ENCODE measurements at regions of chr3 and their contacts with region 1.

Region 1: GRCh38 chr3:31567036-31567435 is 34.3 kb downstream of the STT3B start:
- DNase-seq: no peak
- ATAC-seq: peak in 2 of 4 donors; percentile 55 to 70
- H3K4me3 ChIP-seq: no peak overlapping the region
- H3K27ac ChIP-seq: no peak overlapping the region
- H3K4me1 ChIP-seq: peaks cover 0 to 89% (median 38%) of the 10 kb centered on the region in 12 donors
- H3K27me3 ChIP-seq: no peaks in the 10 kb centered on the region
- CTCF ChIP-seq: peak in 11 of 12 donors; percentile 30 to 64 (median 43)
- POLR2A ChIP-seq: no peak

Region 2: GRCh38 chr3:31596176-31596575 is 29.1 kb after region 1 on chr3:
- intact Hi-C with region 1: loop called in 1 of 10 experiments (anchors 5 kb)
- DNase-seq: no peak
- ATAC-seq: no peak
- H3K4me3 ChIP-seq: no peak overlapping the region
- H3K27ac ChIP-seq: no peak overlapping the region
- H3K4me1 ChIP-seq: peaks cover 0 to 20% (median 2%) of the 10 kb centered on the region in 12 donors
- H3K27me3 ChIP-seq: no peaks in the 10 kb centered on the region
- CTCF ChIP-seq: no peak
- POLR2A ChIP-seq: no peak

Region 3: DNA sequence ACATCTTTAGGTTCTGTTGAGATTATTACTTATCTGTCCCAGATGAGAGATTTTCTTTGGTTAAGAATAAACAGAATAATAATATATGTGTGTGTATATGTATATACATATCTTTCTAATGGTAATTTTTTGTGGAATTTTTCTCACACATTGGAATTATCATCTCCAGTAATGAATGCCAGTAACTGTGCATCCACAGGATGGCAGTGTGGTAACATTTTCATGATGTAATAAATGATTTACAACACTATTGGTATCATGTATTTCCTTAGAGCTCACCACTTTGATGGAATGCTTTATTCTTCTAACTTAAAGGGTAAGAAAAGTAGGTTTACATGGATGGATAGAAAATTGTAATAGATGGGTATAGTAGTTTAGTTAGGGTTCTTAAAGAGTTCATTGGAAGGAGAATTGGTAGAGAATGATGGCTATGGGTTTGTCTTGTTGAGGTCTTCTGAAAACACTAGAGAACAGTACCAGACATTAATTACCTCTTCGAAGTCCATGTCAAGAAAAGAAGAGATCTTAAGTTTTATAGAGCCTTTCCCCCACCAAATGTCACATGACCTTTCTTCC is 43.8 kb after region 1 on chr3:
- intact Hi-C with region 1: loop called in 1 of 10 experiments (anchors 10 kb)
- DNase-seq: no peak
- ATAC-seq: peak in 1 of 4 donors; percentile 42
- H3K4me3 ChIP-seq: no peak overlapping the region
- H3K27ac ChIP-seq: no peak overlapping the region
- H3K4me1 ChIP-seq: peaks cover 0 to 6% (median 0%) of the 10 kb centered on the region in 12 donors
- H3K27me3 ChIP-seq: no peaks in the 10 kb centered on the region
- CTCF ChIP-seq: peak; percentile 34 to 70 (median 50)
- POLR2A ChIP-seq: no peak